Activated B cell treated with CpG ODN at 0.5 μM for 24 hours (primary cell): ENCODE measurements at regions of chr7 and their contacts with region 1.

Region 1: DNA sequence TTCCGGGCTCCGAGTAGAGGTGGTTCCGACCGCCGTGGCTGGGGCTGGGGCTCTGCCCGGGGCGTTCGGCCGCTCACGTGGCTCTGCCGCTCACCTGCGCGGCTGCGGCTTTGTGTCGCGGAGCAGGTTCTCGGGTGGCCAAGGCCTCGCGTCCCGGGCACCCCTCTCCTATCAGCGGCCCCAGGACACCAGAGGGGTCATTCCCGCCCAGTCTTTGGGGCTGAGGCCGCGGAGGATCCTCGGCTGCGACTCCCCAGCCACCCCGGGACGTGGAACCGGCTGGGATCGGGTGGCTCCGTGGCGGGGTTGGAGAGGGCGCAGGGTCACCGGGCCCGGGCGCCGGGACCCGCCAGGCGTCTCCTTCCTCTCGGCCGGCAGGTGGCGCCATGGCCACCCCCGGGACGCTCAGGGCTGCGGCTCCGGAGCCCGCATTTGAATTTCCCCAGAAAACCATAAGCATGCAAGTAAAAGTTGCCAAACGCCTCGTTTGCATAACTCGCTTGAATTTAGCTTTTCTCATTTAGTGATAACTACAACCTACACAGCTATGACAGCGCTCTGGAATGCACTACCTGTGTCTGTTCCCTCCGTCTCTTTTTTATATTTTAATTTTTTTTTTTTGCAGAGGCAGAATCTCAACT is 1.2 kb downstream of the COL26A1 start:
- DNase-seq: peak; percentile 76
- ATAC-seq: peak; percentile 95
- H3K4me3 Mint-ChIP-seq: peak overlapping the region; percentile 41
- H3K27ac Mint-ChIP-seq: no peak overlapping the region
- H3K4me1 Mint-ChIP-seq: peaks cover 10% of the 10 kb centered on the region
- H3K27me3 Mint-ChIP-seq: peaks cover 12% of the 10 kb centered on the region
- CTCF ChIP-seq: peak; percentile 83

Region 2: DNA sequence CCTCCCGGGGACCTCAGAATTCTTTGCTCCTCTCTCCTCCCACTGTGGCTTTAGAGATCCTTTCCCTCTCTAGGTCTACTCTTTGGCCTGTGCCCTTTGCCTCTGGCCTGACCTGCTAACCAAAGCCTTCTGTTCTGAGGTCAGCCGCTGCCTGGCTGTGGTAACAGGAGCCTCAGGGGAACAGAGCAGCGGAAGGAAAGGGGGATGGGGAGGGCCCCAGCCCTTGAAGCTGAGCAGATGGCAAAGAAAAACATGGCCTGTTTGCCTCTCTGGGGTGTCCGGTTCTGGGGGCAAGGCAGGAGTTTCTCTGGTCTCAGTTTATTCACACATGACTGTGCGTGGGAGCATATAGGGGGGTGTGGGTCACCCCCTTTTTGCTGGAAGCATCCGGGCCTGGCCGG is 27.0 kb after region 1 on chr7:
- CTCF ChIA-PET with region 1: interaction called, 8 read pairs
- POLR2A ChIA-PET with region 1: no interaction called
- intact Hi-C with region 1: loop called (anchors 1 kb)
- DNase-seq: peak; percentile 41
- ATAC-seq: peak; percentile 96
- H3K4me3 Mint-ChIP-seq: peak overlapping the region; percentile 67
- H3K27ac Mint-ChIP-seq: peak overlapping the region; percentile 77
- H3K4me1 Mint-ChIP-seq: peaks cover 43% of the 10 kb centered on the region
- H3K27me3 Mint-ChIP-seq: peaks cover 5% of the 10 kb centered on the region
- CTCF ChIP-seq: no peak

Region 3: GRCh38 chr7:101410743-101411507 is 47.1 kb after region 1 on chr7:
- CTCF ChIA-PET with region 1: interaction called, 42 read pairs
- POLR2A ChIA-PET with region 1: interaction called, 3 read pairs
- intact Hi-C with region 1: loop called (anchors 1 kb)
- DNase-seq: peak; percentile 30
- ATAC-seq: peak; percentile 75
- H3K4me3 Mint-ChIP-seq: peak overlapping the region; percentile 55
- H3K27ac Mint-ChIP-seq: no peak overlapping the region
- H3K4me1 Mint-ChIP-seq: peaks cover 13% of the 10 kb centered on the region
- H3K27me3 Mint-ChIP-seq: peaks cover 26% of the 10 kb centered on the region
- CTCF ChIP-seq: no peak

Region 4: DNA sequence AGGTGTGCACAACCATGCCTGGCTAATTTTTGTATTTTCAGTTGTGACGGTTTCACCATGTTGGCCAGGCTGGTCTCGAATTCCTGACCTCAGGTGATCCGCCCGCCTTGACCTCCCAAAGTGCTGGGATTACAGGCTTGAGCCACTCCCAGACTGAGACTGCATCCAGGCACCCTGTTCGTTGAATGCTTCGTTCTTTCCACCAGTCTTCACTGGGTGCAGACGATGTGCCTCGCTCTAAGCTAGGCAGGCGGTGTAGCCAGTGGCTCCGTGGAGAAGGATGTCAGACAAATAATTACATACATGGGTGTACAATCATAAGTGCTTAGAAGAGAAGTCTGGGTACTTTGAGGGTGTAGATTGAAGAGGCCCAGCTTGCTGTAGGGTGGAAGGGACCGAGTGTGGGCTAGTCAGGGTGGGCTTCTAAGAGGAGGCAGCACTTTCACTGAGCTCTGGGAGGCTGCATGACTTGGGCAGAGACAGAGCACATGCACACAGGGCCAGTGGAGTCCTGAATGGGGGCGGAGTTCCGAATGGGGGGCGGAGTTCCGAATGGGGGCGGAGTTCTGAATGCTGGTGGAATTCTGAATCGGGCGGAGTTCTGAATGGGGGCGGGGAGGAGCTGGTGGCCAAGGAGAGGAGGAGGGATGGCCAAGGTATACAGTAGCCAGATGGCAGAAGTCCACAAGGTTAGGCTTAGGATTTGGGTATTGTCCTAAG is 73.2 kb after region 1 on chr7:
- CTCF ChIA-PET with region 1: interaction called, 21 read pairs
- POLR2A ChIA-PET with region 1: interaction called, 3 read pairs
- intact Hi-C with region 1: loop called (anchors 1 kb)
- DNase-seq: no peak
- ATAC-seq: no peak
- H3K4me3 Mint-ChIP-seq: no peak overlapping the region
- H3K27ac Mint-ChIP-seq: no peak overlapping the region
- H3K4me1 Mint-ChIP-seq: no peaks in the 10 kb centered on the region
- H3K27me3 Mint-ChIP-seq: peaks cover 35% of the 10 kb centered on the region
- CTCF ChIP-seq: no peak

Region 5: DNA sequence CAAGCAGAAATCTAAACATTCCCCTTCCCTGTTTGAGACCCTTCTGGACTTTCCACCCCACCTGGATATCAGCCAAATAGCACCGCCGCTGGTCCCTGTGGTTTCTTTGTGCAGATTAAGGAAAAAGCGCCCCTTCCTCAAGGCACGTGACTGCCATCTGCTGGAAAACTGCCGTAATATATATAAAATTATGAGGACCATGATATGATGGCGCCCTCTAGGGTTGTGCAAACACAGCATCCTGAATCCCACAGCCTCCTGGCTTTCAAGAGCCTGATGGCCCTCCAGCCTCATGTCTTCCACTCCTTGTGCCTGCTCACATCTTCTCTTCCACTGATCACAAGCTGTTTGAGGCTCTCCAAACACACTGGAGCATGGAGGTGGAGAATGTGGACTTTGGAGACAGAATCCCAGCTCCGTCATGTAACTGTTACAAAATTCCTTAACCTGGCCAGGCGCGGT is 144.0 kb after region 1 on chr7:
- CTCF ChIA-PET with region 1: interaction called, 15 read pairs
- POLR2A ChIA-PET with region 1: no interaction called
- intact Hi-C with region 1: loop called (anchors 1 kb)
- DNase-seq: no peak
- ATAC-seq: peak; percentile 71
- H3K4me3 Mint-ChIP-seq: peak overlapping the region; percentile 37
- H3K27ac Mint-ChIP-seq: no peak overlapping the region
- H3K4me1 Mint-ChIP-seq: peaks cover 41% of the 10 kb centered on the region
- H3K27me3 Mint-ChIP-seq: peaks cover 8% of the 10 kb centered on the region
- CTCF ChIP-seq: peak; percentile 32

Region 6: GRCh38 chr7:101542527-101543241 is 178.8 kb after region 1 on chr7:
- CTCF ChIA-PET with region 1: interaction called, 3 read pairs
- POLR2A ChIA-PET with region 1: no interaction called
- intact Hi-C with region 1: loop called (anchors 1 kb)
- DNase-seq: peak; percentile 71
- ATAC-seq: peak; percentile 68
- H3K4me3 Mint-ChIP-seq: no peak overlapping the region
- H3K27ac Mint-ChIP-seq: no peak overlapping the region
- H3K4me1 Mint-ChIP-seq: no peaks in the 10 kb centered on the region
- H3K27me3 Mint-ChIP-seq: peaks cover 2% of the 10 kb centered on the region
- CTCF ChIP-seq: peak; percentile 26

Region 7: DNA sequence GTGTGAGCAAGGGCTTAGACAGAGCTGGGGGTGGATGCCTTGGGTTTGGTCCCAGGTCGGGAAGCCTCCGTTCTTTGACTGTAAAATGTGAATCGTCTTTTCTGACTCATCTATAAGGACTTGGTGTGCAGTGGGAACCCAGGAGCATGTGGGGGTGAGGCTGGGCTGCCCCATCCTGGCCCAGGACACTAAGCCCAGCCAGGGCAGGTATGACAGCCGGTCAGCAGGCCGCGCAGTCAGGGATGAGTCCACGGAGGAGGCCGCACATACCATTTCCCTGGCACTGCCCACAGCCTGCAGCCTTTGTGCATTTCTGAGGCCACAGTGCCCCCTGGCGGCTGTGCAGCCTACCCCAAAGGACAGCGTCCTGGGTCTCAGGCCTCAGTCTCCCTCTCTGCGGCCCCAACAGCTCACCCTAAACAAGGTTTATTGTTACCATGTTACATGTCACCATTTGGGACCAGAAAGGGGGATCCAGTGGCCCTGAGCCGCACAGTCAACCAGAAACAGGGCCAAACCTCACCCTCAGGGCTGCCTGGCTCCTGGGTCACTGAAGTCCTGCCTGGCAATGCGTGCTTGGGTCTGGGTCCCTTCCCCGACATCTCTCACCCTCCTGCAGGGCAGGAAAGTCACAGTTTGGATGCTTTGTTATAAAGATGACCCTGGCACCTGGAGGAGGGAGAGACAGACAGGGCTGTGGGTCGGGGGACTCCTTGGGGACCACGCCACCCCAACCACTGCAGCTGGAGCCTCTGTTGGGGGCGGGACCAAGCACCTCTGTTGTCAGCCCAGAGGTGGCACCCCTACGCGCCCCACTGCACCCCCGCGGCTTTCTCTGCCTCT is 908.4 kb after region 1 on chr7:
- CTCF ChIA-PET with region 1: no interaction called
- POLR2A ChIA-PET with region 1: no interaction called
- intact Hi-C with region 1: loop called (anchors 2 kb)
- DNase-seq: peak; percentile 80
- ATAC-seq: peak; percentile 92
- H3K4me3 Mint-ChIP-seq: no peak overlapping the region
- H3K27ac Mint-ChIP-seq: no peak overlapping the region
- H3K4me1 Mint-ChIP-seq: peaks cover 4% of the 10 kb centered on the region
- H3K27me3 Mint-ChIP-seq: no peaks in the 10 kb centered on the region
- CTCF ChIP-seq: peak; percentile 28